OCI-LY7 (cell line): ENCODE measurements at regions of chr10 and their contacts with region 1.

Region 1: DNA sequence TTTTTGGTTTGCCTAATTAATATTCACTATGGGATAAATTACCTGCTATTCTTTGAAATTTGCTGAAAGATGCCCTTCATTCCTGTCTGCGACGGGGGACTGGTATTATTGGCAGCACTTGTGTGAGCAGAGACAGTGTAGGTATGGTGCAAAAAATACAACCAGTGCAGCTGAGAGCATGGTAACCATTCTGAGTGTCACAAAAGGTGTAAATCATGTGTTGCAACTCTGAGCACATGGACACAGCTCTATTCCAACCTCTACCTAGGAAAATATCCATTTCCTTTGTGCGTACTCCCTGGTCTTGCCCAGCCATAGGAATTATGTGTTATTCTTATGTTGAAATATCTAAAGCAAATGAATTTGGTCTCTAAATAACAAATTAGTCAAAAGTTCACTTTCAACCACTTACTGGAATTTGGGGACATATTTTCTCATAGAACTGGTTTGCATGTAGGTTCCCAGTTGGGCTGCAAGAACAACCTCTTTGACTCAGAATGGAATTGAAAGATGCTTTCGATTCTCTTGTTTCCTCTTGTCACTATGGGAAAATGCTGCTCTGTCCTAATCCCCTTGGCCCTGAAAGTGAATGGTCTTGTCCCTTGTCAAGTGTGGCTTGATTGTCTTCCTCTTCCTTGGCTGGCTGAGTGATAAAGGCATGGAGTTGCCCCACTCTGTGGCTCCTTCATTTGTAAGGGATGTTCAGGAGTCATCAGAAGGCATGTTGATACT is 57.0 kb downstream of the CELF2 start:
- DNase-seq: no peak
- H3K4me3 ChIP-seq: no peak overlapping the region
- H3K27ac ChIP-seq: no peak overlapping the region
- H3K4me1 ChIP-seq: no peaks in the 10 kb centered on the region
- CTCF ChIP-seq: no peak

Region 2: GRCh38 chr10:10946801-10947200 is 127.9 kb before region 1 on chr10:
- CTCF ChIA-PET with region 1: no interaction called
- POLR2A ChIA-PET with region 1: no interaction called
- intact Hi-C with region 1: no loop called
- DNase-seq: no peak
- H3K4me3 ChIP-seq: no peak overlapping the region
- H3K27ac ChIP-seq: no peak overlapping the region
- H3K4me1 ChIP-seq: no peaks in the 10 kb centered on the region
- CTCF ChIP-seq: no peak

Region 3: DNA sequence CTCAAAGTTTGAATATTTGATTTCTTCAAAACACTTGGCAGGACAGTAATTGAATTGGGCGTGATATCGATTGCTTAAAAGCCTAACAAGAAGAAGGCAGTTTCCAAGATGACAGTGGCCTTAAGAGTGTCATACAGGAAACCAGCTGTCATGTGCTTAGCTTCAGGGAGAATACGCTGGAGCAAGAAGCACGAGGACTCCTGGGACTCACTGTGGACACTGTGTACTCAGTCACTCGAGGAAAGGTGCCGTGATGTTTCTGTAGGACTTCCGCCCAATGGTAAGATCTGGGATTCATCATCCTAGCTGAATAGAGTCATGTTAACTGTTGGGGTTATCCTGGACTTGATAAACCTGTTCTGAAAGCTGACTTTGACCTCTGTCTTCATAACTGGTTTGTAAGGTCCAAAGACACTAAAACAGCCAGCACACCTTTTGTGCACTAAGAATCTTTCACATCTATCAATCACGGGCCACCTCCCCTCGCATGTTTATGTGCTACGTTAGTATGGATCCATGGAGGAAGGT is 56.5 kb after region 1 on chr10:
- CTCF ChIA-PET with region 1: no interaction called
- POLR2A ChIA-PET with region 1: no interaction called
- intact Hi-C with region 1: loop called (anchors 10 kb)
- DNase-seq: no peak
- H3K4me3 ChIP-seq: no peak overlapping the region
- H3K27ac ChIP-seq: no peak overlapping the region
- H3K4me1 ChIP-seq: no peaks in the 10 kb centered on the region
- CTCF ChIP-seq: no peak